ENCODE measurements at regions of chr12 and their contacts with region 1.

Region 1: DNA sequence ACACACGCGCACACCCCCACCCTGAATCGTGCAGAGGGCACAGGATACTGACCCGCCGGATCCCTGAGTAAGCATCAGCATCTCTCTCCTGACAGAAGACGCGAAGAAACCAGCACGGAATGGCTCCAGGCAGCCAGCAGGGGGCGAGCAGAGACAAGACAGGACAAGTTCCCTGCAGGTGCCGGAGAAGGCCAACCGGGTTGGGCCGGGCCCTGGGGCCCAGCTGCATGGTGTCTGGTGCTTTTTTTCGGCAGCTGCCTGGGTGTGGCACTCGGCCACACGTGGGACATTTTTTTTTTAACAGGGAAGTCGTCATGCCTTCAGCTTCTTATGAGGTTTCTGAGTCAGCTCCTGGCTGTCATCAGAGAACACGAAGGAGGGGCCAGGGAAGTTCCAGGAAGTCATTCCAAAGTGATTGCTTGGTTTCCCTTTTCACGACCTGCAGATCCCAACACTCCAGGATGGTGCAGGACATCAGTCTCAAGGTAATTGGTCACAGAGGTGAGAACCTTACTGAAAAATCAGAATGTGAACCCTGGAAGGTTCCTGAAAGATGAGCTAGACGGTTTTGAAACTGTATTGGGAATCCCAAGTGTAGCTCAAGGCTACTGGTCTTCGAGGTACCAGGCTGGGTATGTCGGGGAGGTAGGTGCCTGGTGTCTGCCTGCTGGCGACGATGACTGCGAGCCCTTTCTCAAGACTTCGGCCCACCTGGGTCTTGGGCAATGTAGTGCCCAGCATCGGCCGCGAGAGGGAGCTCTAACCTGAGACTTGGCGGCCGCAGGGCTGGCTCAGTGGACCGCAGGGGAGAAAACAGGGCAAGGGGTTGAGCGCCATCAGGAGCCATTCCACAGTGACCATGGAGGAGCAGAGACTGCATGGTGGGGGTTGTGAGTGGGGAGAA is 190.8 kb upstream of the PRMT8 start:
- DNase-seq: peak; percentile 96
- H3K4me3 Mint-ChIP-seq: peak overlapping the region; percentile 71
- H3K27ac Mint-ChIP-seq: peak overlapping the region; percentile 98
- H3K4me1 Mint-ChIP-seq: peaks cover 34% of the 10 kb centered on the region
- H3K27me3 Mint-ChIP-seq: no peaks in the 10 kb centered on the region
- CTCF ChIP-seq: peak; percentile 98

Region 2: GRCh38 chr12:3313675-3314663 is 13.8 kb after region 1 on chr12:
- CTCF ChIA-PET with region 1: interaction called, 135 read pairs
- POLR2A ChIA-PET with region 1: interaction called, 8 read pairs
- intact Hi-C with region 1: no loop called
- DNase-seq: no peak
- H3K4me3 Mint-ChIP-seq: no peak overlapping the region
- H3K27ac Mint-ChIP-seq: no peak overlapping the region
- H3K4me1 Mint-ChIP-seq: peaks cover 51% of the 10 kb centered on the region
- H3K27me3 Mint-ChIP-seq: no peaks in the 10 kb centered on the region
- CTCF ChIP-seq: peak; percentile 35

Region 3: GRCh38 chr12:3507361-3507760 is 207.2 kb after region 1 on chr12:
- CTCF ChIA-PET with region 1: interaction called, 14 read pairs
- POLR2A ChIA-PET with region 1: no interaction called
- intact Hi-C with region 1: no loop called
- DNase-seq: no peak
- H3K4me3 Mint-ChIP-seq: no peak overlapping the region
- H3K27ac Mint-ChIP-seq: no peak overlapping the region
- H3K4me1 Mint-ChIP-seq: peaks cover 8% of the 10 kb centered on the region
- H3K27me3 Mint-ChIP-seq: no peaks in the 10 kb centered on the region
- CTCF ChIP-seq: no peak

Region 4: GRCh38 chr12:3641428-3642018 is 341.3 kb after region 1 on chr12:
- CTCF ChIA-PET with region 1: interaction called, 10 read pairs
- POLR2A ChIA-PET with region 1: interaction called, 3 read pairs
- intact Hi-C with region 1: loop called (anchors 1 kb)
- DNase-seq: peak; percentile 27
- H3K4me3 Mint-ChIP-seq: no peak overlapping the region
- H3K27ac Mint-ChIP-seq: peak overlapping the region; percentile 21
- H3K4me1 Mint-ChIP-seq: peaks cover 13% of the 10 kb centered on the region
- H3K27me3 Mint-ChIP-seq: no peaks in the 10 kb centered on the region
- CTCF ChIP-seq: no peak

Region 5: DNA sequence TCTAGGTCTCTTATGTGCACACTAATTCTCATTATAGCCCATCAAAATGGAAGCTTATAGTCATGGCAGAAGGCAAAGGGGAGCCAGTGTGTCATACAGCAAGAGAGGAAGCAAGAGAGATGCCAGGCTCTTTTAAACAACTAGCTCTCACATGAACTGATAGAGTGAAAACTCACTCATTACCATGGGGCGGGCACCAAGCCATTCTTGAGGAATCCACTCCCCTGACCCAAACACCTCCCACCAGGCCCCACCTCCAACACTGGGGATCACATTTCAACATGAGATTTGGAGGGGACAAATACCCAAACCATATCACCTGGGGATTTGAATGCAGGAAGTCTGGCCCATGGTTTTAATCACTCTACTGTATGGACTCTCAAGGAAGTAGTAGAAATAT is 489.7 kb after region 1 on chr12:
- CTCF ChIA-PET with region 1: interaction called, 21 read pairs
- POLR2A ChIA-PET with region 1: no interaction called
- intact Hi-C with region 1: no loop called
- DNase-seq: no peak
- H3K4me3 Mint-ChIP-seq: no peak overlapping the region
- H3K27ac Mint-ChIP-seq: no peak overlapping the region
- H3K4me1 Mint-ChIP-seq: no peaks in the 10 kb centered on the region
- H3K27me3 Mint-ChIP-seq: no peaks in the 10 kb centered on the region
- CTCF ChIP-seq: no peak

Region 6: DNA sequence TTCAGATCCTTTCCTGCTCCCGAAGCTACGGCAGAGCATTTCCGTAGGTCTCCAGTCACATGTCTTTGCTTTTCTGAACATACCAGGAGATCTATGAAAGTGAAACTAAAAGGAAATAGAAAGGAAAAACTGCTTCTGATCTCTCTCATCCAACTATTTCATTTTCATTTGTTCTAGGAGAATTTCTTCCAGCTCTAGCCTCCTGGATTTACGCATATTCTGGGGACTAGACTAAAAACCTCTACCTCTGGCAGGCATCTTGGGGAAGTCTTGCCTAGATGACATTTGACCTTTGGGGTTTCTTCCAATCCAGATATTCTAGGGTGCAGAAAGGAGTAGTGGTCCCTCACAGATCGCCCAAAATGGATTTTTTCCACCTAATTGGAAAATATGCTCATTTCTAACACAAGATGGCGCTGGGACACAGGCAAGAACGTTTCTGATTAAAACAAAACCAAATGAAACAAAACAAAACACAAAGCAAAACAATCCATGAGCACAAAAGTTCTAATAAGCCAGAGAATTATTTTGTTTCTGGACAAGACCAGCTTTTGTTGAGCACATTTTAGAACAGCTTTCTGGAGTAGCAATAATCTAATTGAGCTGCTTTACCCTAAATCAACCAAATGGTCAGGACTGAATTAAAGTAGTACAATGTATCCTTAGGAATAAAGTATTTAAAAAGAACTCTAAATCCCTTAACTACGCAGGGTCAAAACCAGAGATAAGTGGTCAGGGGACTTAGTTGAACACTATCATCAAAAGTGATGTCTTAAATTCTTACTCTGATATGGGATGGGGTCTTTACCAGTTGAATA is 585.3 kb after region 1 on chr12:
- CTCF ChIA-PET with region 1: interaction called, 6 read pairs
- POLR2A ChIA-PET with region 1: no interaction called
- intact Hi-C with region 1: loop called (anchors 5 kb)
- DNase-seq: peak; percentile 47
- H3K4me3 Mint-ChIP-seq: peak overlapping the region; percentile 59
- H3K27ac Mint-ChIP-seq: peak overlapping the region; percentile 63
- H3K4me1 Mint-ChIP-seq: peaks cover 6% of the 10 kb centered on the region
- H3K27me3 Mint-ChIP-seq: peaks cover 20% of the 10 kb centered on the region
- CTCF ChIP-seq: peak; percentile 83

Measured in MCF 10A (cell line).